H1 (cell line): ENCODE measurements at regions of chr5 and their contacts with region 1.

Region 1: GRCh38 chr5:162227075-162227474 is 159.5 kb downstream of the GABRG2 start:
- DNase-seq: no peak
- H3K4me3 ChIP-seq: no peak overlapping the region
- H3K27ac ChIP-seq: no peak overlapping the region
- H3K4me1 ChIP-seq: no peaks in the 10 kb centered on the region
- H3K27me3 ChIP-seq: no peaks in the 10 kb centered on the region
- CTCF ChIP-seq: peak in 2 of 3 experiments; percentile 68 to 71; a peak in 3 of 4 replicates
- EP300 ChIP-seq: no peak
- POLR2A ChIP-seq: no peak
- RAD21 ChIP-seq: peak; percentile 91 to 94

Region 2: GRCh38 chr5:162209005-162209605 is 18.0 kb before region 1 on chr5:
- CTCF ChIA-PET with region 1: interaction called, 12 read pairs
- POLR2A ChIA-PET with region 1: no interaction called
- DNase-seq: peak; percentile 60 to 70
- H3K4me3 ChIP-seq: no peak overlapping the region
- H3K27ac ChIP-seq: no peak overlapping the region
- H3K4me1 ChIP-seq: no peaks in the 10 kb centered on the region
- H3K27me3 ChIP-seq: no peaks in the 10 kb centered on the region; a peak in 1 of 7 replicates
- CTCF ChIP-seq: peak; percentile 55 to 90 (median 80)
- EP300 ChIP-seq: no peak
- POLR2A ChIP-seq: no peak
- RAD21 ChIP-seq: peak; percentile 79 to 81

Region 3: DNA sequence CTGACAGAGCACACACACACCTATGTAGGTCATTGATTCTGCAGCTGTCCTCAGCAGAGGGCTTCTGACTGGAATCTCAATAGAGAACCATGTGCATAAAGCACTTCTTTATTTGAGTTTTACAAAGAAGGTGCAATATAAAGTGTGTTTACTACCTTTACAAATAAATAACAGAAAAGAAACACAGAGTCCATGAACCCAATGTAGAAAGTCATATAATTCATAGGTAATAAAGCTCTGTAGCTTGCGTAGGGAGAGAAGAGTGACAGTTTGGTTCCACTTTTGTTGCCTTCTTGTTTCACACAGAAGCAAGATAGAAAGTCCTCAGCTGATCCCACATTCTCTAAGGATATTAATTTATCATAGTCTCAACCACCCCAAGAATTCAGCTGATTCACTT is 10.0 kb before region 1 on chr5:
- CTCF ChIA-PET with region 1: interaction called, 12 read pairs
- POLR2A ChIA-PET with region 1: no interaction called
- DNase-seq: no peak
- H3K4me3 ChIP-seq: no peak overlapping the region
- H3K27ac ChIP-seq: no peak overlapping the region
- H3K4me1 ChIP-seq: no peaks in the 10 kb centered on the region
- H3K27me3 ChIP-seq: no peaks in the 10 kb centered on the region
- CTCF ChIP-seq: no peak
- EP300 ChIP-seq: no peak
- POLR2A ChIP-seq: no peak
- RAD21 ChIP-seq: no peak

Region 4: DNA sequence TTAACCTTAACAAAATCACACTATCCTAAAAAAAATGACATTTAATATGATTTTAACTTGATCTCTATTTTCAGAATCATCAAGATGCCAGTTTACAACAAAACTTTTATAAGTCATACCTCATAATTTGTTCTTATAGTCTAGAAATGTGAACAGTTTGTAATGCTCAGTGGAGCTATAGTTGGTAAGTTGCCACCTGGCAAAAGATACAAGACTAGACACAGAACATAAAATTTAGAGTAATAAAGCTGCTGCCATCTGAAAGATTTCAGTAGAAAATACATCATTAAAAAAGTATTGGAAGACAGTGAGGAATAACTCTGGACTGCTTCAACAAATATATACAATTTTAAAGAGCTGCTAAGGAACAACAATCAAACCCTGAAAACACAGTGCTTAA is 74.3 kb after region 1 on chr5:
- CTCF ChIA-PET with region 1: no interaction called
- POLR2A ChIA-PET with region 1: no interaction called
- DNase-seq: no peak
- H3K4me3 ChIP-seq: no peak overlapping the region
- H3K27ac ChIP-seq: no peak overlapping the region
- H3K4me1 ChIP-seq: no peaks in the 10 kb centered on the region
- H3K27me3 ChIP-seq: no peaks in the 10 kb centered on the region
- CTCF ChIP-seq: no peak
- EP300 ChIP-seq: no peak
- POLR2A ChIP-seq: no peak
- RAD21 ChIP-seq: no peak

Region 5: GRCh38 chr5:163005949-163006348 is 778.9 kb after region 1 on chr5:
- CTCF ChIA-PET with region 1: interaction called, 10 read pairs
- POLR2A ChIA-PET with region 1: no interaction called
- DNase-seq: no peak
- H3K4me3 ChIP-seq: no peak overlapping the region
- H3K27ac ChIP-seq: no peak overlapping the region
- H3K4me1 ChIP-seq: no peaks in the 10 kb centered on the region
- H3K27me3 ChIP-seq: no peaks in the 10 kb centered on the region
- CTCF ChIP-seq: peak in 2 of 3 experiments; percentile 31 to 36; a peak in 3 of 4 replicates
- EP300 ChIP-seq: no peak
- POLR2A ChIP-seq: no peak
- RAD21 ChIP-seq: peak; percentile 45 to 48

Region 6: GRCh38 chr5:163408311-163408923 is 1181.3 kb after region 1 on chr5:
- CTCF ChIA-PET with region 1: interaction called, 14 read pairs
- POLR2A ChIA-PET with region 1: no interaction called
- DNase-seq: peak in 1 of 2 experiments; percentile 75
- H3K4me3 ChIP-seq: no peak overlapping the region
- H3K27ac ChIP-seq: no peak overlapping the region
- H3K4me1 ChIP-seq: no peaks in the 10 kb centered on the region
- H3K27me3 ChIP-seq: no peaks in the 10 kb centered on the region
- CTCF ChIP-seq: peak; percentile 36 to 87 (median 80)
- EP300 ChIP-seq: no peak
- POLR2A ChIP-seq: no peak
- RAD21 ChIP-seq: peak; percentile 92 to 94